ACHN (cell line): ENCODE measurements at regions of chr7 and their contacts with region 1.

Region 1: DNA sequence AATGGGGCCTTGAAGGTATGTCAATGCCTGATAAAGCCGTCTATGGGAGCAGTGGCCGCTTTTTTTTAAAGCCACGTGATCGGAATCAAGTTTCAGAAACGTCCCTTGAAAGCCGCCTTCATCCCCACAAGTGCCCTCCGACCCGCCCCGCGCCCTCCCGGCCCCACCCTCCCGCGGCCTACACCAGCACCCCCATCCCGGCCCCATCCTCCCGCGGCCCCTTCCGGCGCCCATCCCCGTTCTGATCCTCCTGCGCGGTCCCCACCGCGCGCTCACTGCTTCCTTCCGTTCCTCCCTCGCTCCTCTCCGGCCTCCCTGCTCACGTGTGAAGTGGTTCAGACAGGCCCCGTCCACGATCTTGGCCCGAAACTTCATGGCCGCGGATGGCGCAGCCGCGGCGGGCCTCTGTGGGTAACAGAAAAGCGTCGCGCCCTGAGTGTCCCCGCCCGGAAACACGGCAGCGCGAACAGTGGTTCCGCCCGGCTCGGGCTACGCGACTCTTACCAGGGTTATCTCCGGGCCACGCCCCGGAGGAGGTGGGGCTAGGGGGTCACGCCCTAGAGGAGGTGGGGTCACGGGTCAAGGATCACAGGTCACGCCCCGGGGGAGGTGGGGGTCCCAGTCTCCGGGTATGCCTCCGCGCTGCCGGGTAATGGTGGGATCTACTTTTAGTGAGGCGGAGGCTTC is at the start of gene HUS1:
- DNase-seq: peak; percentile 94

Region 2: GRCh38 chr7:47714669-47715607 is 264.4 kb before region 1 on chr7:
- in situ Hi-C with region 1: no loop called
- DNase-seq: no peak

Region 3: GRCh38 chr7:48088559-48089045 is 109.3 kb after region 1 on chr7:
- in situ Hi-C with region 1: loop called (anchors 25 kb)
- DNase-seq: peak; percentile 100

Region 4: DNA sequence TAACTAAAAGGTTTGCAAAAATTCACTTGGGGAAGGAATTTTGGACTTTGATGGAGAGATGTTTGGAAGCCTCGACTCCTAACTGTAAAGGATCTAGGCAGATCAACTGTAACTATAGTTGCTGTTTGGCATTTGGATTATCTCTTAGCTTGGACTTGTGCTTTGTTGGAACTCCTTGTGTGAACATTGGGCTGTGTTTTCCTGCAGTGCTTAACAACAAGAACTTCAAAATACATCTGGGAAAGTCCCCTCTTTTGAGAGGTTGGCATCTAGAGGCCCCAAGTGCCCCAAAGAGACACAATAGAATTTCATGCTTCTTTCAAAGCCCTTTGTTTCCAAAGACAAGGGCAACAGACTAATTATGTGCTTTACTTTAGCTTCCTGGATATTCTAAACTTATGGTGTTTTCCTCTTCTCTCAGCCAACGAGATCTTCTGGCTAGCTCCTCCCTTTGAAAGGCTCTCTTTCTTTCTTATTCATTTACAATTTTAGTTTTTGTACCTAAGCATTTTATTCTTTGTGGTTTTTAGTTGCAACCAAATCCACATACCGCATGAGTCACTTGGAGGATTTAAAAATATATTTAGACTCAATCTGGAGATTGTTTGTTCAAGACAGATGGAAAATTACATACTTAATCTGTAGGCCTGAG is 203.6 kb after region 1 on chr7:
- in situ Hi-C with region 1: no loop called
- DNase-seq: no peak

Region 5: DNA sequence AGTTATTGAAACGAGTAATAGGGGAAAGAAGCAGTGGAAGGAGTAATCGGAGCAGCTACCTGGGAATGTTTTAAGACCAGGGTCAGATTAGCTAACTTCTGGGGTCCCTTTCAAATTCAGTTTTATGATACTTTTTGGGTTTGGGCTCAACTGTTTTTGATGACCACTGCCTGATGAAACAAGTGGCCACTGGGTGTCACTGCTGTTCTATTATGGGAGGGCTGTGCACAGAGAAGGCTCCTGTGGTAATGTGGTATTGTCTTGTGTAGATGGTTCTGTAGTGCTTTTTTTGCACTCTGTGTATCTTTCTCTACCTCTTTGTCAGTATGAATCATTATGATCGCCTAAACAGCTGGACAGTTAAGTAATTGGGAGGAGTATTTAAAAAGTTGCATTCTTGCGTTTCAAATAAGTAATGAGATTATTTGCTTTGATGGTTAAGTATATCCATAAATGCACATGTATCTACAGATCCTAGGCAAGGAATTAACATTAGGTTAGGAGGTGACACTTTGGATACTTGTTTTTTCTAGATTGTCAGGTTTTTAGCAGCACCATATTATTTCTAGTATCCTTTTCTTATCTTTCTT is 320.4 kb after region 1 on chr7:
- in situ Hi-C with region 1: no loop called
- DNase-seq: peak; percentile 59